ENCODE measurements at regions of chr14 and their contacts with region 1.

Region 1: DNA sequence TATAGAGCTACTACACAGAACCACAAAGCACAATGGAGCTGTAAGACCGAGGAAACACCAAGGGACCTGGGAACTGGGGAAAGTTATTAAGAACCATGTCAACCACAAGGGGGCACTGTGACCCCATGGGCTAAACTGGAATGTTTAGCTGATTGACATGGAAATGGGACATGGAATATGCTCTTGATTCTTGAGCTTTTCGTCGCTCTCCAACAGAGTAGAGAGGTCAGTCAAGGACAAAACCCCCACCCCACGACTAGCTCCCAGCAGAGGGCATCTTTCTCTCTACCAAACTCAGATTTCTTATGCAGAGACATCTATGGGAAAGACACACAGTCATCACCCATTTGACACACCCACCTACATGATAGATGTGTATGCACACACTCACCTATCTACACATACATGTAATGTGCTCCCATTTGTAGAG is 10.1 kb downstream of the NDRG2 start:
- DNase-seq: peak in 4 of 5 donors; percentile 91 to 96 (median 93)
- H3K4me3 ChIP-seq: no peak overlapping the region
- H3K27ac ChIP-seq: no peak overlapping the region
- H3K4me1 ChIP-seq: peaks cover 0 to 4% (median 0%) of the 10 kb centered on the region in 3 donors
- H3K27me3 ChIP-seq: no peaks in the 10 kb centered on the region
- CTCF ChIP-seq: peak; percentile 91

Region 2: DNA sequence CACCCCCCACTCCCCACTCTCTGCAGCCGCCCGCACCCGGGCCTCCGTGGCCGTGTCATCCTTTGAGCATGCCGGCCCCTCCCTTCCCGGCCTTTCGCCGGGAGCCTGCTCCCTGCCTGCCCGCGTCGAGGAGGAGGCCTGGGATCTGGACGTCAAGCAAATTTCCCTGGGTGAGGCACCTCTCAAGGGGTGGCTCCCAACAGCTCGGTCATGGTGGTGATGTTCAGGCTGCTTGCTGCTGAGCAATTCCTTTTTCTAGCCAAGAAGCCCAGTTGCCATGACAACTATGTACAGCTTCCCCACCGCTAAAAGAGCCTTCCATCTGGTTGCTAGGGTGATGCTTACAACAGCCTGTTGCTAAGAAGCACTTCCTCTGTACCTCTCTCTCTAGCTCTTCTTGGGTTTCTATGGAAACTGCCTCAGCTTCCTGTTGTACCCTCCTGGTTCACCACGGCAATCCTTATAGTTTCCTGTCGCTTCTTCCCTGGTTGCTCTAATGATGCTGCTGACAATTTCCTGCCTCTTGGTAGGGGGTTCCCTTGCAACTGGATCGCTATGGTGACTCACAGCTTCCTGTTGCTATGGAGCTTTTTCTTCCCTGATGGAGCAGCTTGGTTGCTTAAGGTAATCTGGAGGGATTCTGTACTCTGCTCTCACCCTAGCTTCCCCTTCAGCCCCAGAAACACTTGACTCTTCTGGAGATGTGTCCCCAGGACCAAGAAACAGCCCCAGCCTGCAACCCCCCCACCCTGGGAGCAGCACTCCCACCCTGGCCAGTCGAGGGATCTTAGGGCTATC is 72.7 kb after region 1 on chr14:
- intact Hi-C with region 1: loop called (anchors 10 kb)
- DNase-seq: peak in 3 of 5 donors; percentile 50 to 68 (median 60)
- H3K4me3 ChIP-seq: no peak overlapping the region
- H3K27ac ChIP-seq: no peak overlapping the region
- H3K4me1 ChIP-seq: no peaks in the 10 kb centered on the region
- H3K27me3 ChIP-seq: no peaks in the 10 kb centered on the region
- CTCF ChIP-seq: no peak